ENCODE measurements at regions of chr2 and their contacts with region 1.

Region 1: GRCh38 chr2:78309460-78309859 is 716.0 kb upstream of the REG3G start:
- DNase-seq: peak; percentile 75
- H3K4me3 ChIP-seq: peak overlapping the region in 1 of 3 experiments; percentile 36
- H3K27ac ChIP-seq: peak overlapping the region; percentile 63
- H3K4me1 ChIP-seq: peaks cover 23% of the 10 kb centered on the region
- H3K27me3 ChIP-seq: no peaks in the 10 kb centered on the region
- CTCF ChIP-seq: no peak
- POLR2A ChIP-seq: no peak

Region 2: DNA sequence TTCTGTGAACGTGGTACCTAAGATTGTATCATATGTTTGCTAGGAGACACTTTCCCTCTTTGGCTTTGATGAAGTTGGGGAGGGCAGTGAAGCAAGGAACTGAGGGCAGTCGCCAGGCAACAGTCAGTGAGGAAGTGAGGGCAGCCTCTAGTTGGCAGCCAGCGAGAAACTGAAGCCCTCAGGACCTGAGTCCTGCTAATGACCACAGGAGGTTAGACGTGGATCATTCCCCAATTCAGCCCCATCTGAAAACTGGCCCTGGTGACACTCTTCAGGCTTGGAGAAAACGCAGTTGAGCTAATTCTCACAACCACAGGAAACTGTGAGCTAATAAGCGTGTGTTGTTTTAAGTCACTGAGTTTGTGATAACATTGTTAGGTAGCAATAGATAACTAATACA is 631.5 kb after region 1 on chr2:
- CTCF ChIA-PET with region 1: no interaction called
- POLR2A ChIA-PET with region 1: no interaction called
- dilution Hi-C with region 1: no loop called
- intact Hi-C with region 1: loop called (anchors 1 kb)
- DNase-seq: peak; percentile 95
- H3K4me3 ChIP-seq: no peak overlapping the region
- H3K27ac ChIP-seq: peak overlapping the region; percentile 97
- H3K4me1 ChIP-seq: peaks cover 17% of the 10 kb centered on the region
- H3K27me3 ChIP-seq: no peaks in the 10 kb centered on the region
- CTCF ChIP-seq: no peak
- POLR2A ChIP-seq: no peak